Activated CD8-positive, alpha-beta T cell treated with anti-CD3 and anti-CD28 coated beads for 36 hours (primary cell): ENCODE measurements at regions of chr1 and their contacts with region 1.

Region 1: GRCh38 chr1:222095606-222096475 is 354.0 kb upstream of the DUSP10 start:
- DNase-seq: peak; percentile 72
- ATAC-seq: peak; percentile 91
- H3K4me3 Mint-ChIP-seq: no peak overlapping the region
- H3K27ac Mint-ChIP-seq: no peak overlapping the region
- H3K4me1 Mint-ChIP-seq: no peaks in the 10 kb centered on the region
- H3K27me3 Mint-ChIP-seq: no peaks in the 10 kb centered on the region
- CTCF ChIP-seq: peak; percentile 89

Region 2: DNA sequence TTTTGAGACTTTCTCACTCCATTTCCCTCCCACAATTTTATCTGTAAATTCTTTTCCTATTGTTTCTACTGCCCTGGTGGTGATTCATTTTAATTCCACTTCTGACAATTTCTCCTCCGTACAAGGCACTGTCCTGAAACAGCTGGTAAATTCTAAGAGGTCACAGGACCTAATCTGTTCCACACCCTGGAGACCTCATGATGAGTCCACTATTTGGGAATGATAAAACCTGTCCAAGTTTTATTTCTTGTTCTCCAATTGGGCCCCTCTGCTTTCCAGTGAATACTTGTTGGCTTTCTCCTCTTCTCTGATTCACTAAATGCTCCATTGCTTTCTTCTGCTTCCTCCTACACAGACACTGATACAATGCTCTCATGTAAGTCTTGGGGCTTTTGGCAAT is 10.8 kb before region 1 on chr1:
- CTCF ChIA-PET with region 1: interaction called, 10 read pairs
- POLR2A ChIA-PET with region 1: no interaction called
- intact Hi-C with region 1: no loop called
- DNase-seq: no peak
- ATAC-seq: no peak
- H3K4me3 Mint-ChIP-seq: no peak overlapping the region
- H3K27ac Mint-ChIP-seq: no peak overlapping the region
- H3K4me1 Mint-ChIP-seq: no peaks in the 10 kb centered on the region
- H3K27me3 Mint-ChIP-seq: peaks cover 11% of the 10 kb centered on the region
- CTCF ChIP-seq: no peak